ENCODE measurements at regions of chr2 and their contacts with region 1.

Region 1: DNA sequence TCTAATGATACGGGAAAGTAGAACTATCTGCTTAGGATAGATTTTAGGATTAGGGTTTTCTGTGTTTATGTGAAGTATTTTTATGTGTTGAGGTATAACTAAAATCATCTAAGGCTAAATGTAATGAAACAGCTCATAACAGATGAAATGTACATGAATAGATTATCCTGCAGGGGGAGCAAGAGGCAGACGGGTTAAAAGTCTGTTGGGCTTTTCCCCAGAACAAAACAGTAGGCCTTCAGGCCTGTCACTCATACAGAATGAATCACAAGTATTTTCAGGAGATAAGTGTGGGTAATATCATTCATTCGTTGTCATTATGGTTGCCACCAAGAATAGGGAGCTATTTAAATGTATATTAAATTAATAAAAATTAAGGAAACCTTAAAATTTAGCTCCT is 107.9 kb upstream of the IL1R2 start:
- DNase-seq: peak; percentile 74
- H3K4me3 Mint-ChIP-seq: no peak overlapping the region
- H3K27ac Mint-ChIP-seq: peak overlapping the region; percentile 61
- H3K4me1 Mint-ChIP-seq: peaks cover 17% of the 10 kb centered on the region
- H3K27me3 Mint-ChIP-seq: no peaks in the 10 kb centered on the region

Region 2: DNA sequence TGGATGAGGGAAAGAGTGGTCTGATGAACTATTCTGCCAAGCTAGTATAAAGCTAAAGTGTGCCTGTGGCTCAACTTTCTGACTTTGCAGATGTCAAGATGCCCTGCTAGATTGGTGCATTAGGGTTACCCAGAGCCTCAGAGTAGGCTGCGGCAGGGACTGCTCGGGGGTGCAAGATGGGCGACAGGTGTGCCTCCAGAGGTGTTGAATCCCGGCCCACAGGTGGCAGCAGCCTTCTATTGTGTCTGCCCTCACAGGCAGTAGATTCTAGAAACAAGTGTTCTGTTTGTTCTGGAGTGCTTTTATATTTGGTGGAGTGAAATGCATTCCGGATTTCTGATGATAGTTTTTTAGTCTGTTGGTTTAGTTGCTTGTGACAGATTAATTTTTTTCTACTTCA is 23.7 kb before region 1 on chr2:
- CTCF ChIA-PET with region 1: interaction called, 11 read pairs
- intact Hi-C with region 1: no loop called
- DNase-seq: peak; percentile 24
- H3K4me3 Mint-ChIP-seq: no peak overlapping the region
- H3K27ac Mint-ChIP-seq: no peak overlapping the region
- H3K4me1 Mint-ChIP-seq: peaks cover 7% of the 10 kb centered on the region
- H3K27me3 Mint-ChIP-seq: no peaks in the 10 kb centered on the region

Region 3: GRCh38 chr2:101900375-101900774 is 16.5 kb after region 1 on chr2:
- CTCF ChIA-PET with region 1: interaction called, 24 read pairs
- intact Hi-C with region 1: loop called (anchors 1 kb)
- DNase-seq: peak; percentile 87
- H3K4me3 Mint-ChIP-seq: no peak overlapping the region
- H3K27ac Mint-ChIP-seq: peak overlapping the region; percentile 87
- H3K4me1 Mint-ChIP-seq: peaks cover 33% of the 10 kb centered on the region
- H3K27me3 Mint-ChIP-seq: peaks cover 2% of the 10 kb centered on the region

Region 4: DNA sequence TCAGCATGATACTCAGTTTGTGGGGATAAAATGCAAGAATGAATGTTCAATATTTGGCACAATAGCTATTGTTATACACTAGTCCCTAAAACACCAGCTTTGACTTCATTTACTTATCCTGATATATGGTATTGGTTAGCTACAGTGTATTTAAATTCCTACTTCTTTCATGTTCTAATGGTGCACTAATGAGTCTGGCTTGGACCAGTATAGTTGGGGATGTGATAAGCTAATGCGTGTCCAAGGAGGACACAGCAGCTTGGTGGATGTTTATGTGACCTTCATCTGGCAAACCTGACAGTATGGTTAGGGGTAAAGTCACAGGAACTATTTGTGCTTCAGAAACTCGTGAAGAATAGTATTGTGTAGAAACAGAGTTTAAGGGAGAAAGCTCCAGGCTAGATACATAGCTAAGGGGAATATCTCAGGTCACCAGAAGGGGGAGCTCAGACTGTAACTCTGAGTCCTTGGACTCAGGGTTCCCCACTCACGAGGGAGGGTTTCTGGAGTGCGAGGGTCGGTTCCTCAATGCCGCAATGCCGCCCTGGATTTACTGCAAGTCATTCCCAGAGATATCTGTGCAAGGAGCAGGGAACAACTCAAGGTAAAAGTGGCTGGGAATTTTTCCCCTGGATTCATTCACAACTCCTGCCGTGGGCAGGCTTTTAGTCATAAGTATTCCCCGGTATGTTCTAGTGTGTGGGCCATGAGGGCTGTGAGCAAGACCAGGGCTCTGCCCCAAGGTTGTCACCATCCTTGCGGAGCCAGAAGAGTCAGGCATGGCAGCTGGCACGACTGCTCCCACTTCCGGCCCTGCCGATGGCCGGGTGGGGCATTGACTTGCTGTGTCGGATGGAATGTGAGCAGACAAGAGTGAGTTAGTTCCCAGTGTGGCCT is 122.4 kb after region 1 on chr2:
- CTCF ChIA-PET with region 1: interaction called, 13 read pairs
- intact Hi-C with region 1: no loop called
- DNase-seq: peak; percentile 68
- H3K4me3 Mint-ChIP-seq: no peak overlapping the region
- H3K27ac Mint-ChIP-seq: no peak overlapping the region
- H3K4me1 Mint-ChIP-seq: peaks cover 19% of the 10 kb centered on the region
- H3K27me3 Mint-ChIP-seq: no peaks in the 10 kb centered on the region

Region 5: GRCh38 chr2:102166189-102166845 is 282.5 kb after region 1 on chr2:
- CTCF ChIA-PET with region 1: interaction called, 20 read pairs
- intact Hi-C with region 1: loop called (anchors 1 kb)
- DNase-seq: peak; percentile 57
- H3K4me3 Mint-ChIP-seq: no peak overlapping the region
- H3K27ac Mint-ChIP-seq: no peak overlapping the region
- H3K4me1 Mint-ChIP-seq: peaks cover 9% of the 10 kb centered on the region
- H3K27me3 Mint-ChIP-seq: no peaks in the 10 kb centered on the region

Region 6: GRCh38 chr2:102355526-102356380 is 471.9 kb after region 1 on chr2 and contains the start of gene IL18R1:
- CTCF ChIA-PET with region 1: interaction called, 3 read pairs
- intact Hi-C with region 1: loop called (anchors 5 kb)
- DNase-seq: peak; percentile 74
- H3K4me3 Mint-ChIP-seq: peak within 1 kb of the TSS; percentile 99
- H3K27ac Mint-ChIP-seq: peak within 1 kb of the TSS; percentile 96
- H3K4me1 Mint-ChIP-seq: peaks cover 45% of the 10 kb centered on the region
- H3K27me3 Mint-ChIP-seq: no peaks in the 10 kb centered on the region
- total RNA-seq, gene IL18R1: 17.1 to 18.4 TPM

Region 7: GRCh38 chr2:102449370-102449974 is 565.6 kb after region 1 on chr2:
- CTCF ChIA-PET with region 1: interaction called, 4 read pairs
- intact Hi-C with region 1: loop called (anchors 1 kb)
- DNase-seq: peak; percentile 86
- H3K4me3 Mint-ChIP-seq: no peak overlapping the region
- H3K27ac Mint-ChIP-seq: no peak overlapping the region
- H3K4me1 Mint-ChIP-seq: peaks cover 2% of the 10 kb centered on the region
- H3K27me3 Mint-ChIP-seq: no peaks in the 10 kb centered on the region

Measured in activated naive CD4-positive, alpha-beta T cell treated with anti-CD3 and anti-CD28 coated beads for 36 hours (primary cell).